AG04449 (cell line): ENCODE measurements at regions of chr3 and their contacts with region 1.

Region 1: GRCh38 chr3:107767897-107768605 is 245.3 kb downstream of the BBX start:
- DNase-seq: no peak
- H3K4me3 ChIP-seq: no peak overlapping the region
- CTCF ChIP-seq: no peak

Region 2: DNA sequence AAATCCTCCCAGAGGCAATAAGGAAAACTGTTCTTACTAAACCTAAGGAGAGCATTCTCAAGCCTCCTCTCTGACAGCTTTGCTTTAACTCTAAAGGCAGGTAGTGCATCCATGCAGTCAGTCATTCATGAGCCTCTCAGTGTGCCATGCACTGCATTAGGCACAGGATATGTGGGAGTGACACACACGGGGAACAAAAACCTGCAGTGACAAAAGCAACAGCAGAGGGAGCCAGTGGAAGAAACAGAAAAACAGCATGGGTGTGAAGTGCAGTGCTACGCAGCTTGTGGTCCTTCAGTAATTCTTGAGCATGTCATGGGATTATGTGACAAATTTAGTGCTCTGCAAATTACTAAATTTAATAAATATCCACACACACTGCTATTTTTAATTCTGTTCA is 14.6 kb before region 1 on chr3:
- CTCF ChIA-PET with region 1: interaction called, 13 read pairs
- POLR2A ChIA-PET with region 1: no interaction called
- DNase-seq: no peak
- H3K4me3 ChIP-seq: no peak overlapping the region
- CTCF ChIP-seq: peak; percentile 60

Region 3: GRCh38 chr3:108171106-108171505 is 403.1 kb after region 1 on chr3:
- CTCF ChIA-PET with region 1: no interaction called
- POLR2A ChIA-PET with region 1: no interaction called
- DNase-seq: no peak
- H3K4me3 ChIP-seq: no peak overlapping the region
- CTCF ChIP-seq: no peak